Uterus (tissue), 4 donors: ENCODE measurements at regions of chr3 and their contacts with region 1.

Region 1: DNA sequence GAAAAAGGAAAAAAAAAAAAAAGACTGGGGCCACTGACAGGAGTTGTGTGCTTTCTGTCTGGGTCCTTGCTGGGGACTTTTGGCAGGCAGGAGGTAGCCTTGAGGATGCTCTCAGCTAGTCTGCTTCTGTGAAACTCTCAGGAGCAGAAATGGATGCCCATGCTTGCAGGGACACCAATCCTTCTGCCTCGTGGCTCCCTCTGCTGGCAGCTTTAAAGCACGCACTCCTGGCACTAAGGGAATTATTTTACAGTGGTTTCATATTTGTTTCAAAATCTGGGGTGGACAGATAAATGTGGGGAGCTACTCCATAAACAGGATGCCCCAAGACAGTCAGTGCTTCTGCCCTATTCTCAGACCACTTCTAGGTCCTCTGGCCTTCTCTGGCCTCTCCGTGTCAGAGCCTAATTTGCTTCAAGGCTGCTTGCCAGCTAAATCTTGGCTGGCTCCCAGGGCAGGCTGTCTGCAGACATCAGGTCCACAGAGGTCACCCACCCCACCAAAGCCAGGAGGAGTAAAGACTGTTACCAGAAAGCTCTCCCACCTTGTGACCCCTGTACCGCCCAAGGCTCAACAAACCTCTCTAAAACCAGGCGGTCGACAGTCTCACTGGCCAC is 17.1 kb downstream of the TRAIP start:
- DNase-seq: peak; percentile 82 to 86
- H3K4me3 ChIP-seq: no peak overlapping the region
- H3K27ac ChIP-seq: peak overlapping the region; percentile 5 to 51
- H3K4me1 ChIP-seq: no peaks in the 10 kb centered on the region
- H3K27me3 ChIP-seq: no peaks in the 10 kb centered on the region
- CTCF ChIP-seq: peak; percentile 85 to 96 (median 92)
- POLR2A ChIP-seq: no peak

Region 2: GRCh38 chr3:49703443-49703927 is 135.8 kb before region 1 on chr3:
- intact Hi-C with region 1: loop called (anchors 10 kb)
- DNase-seq: peak; percentile 43 to 54
- H3K4me3 ChIP-seq: no peak overlapping the region
- H3K27ac ChIP-seq: no peak overlapping the region
- H3K4me1 ChIP-seq: no peaks in the 10 kb centered on the region
- H3K27me3 ChIP-seq: no peaks in the 10 kb centered on the region
- CTCF ChIP-seq: peak; percentile 37 to 67 (median 54)
- POLR2A ChIP-seq: no peak

Region 3: GRCh38 chr3:49802719-49803464 is 36.4 kb before region 1 on chr3 and contains the start of gene INKA1:
- intact Hi-C with region 1: loop called (anchors 2 kb)
- DNase-seq: peak; percentile 90 to 91
- H3K4me3 ChIP-seq: peak within 1 kb of the TSS; percentile 72 to 84
- H3K27ac ChIP-seq: peak within 1 kb of the TSS; percentile 92 to 94
- H3K4me1 ChIP-seq: peaks cover 0 to 32% of the 10 kb centered on the region in 2 donors
- H3K27me3 ChIP-seq: no peaks in the 10 kb centered on the region
- CTCF ChIP-seq: peak; percentile 84 to 96 (median 91)
- POLR2A ChIP-seq: peak; percentile 69 to 77
- total RNA-seq, gene INKA1: 3.1 to 16.7 (median 6.6) TPM